Vagina (tissue), 2 donors: ENCODE measurements at regions of chr3 and their contacts with region 1.

Region 1: GRCh38 chr3:157174649-157175498 is 14.9 kb upstream of the CCNL1 start:
- DNase-seq: peak in 1 of 2 donors; percentile 100
- H3K4me3 ChIP-seq: peak overlapping the region; percentile 56 to 59
- H3K27ac ChIP-seq: peak overlapping the region; percentile 95
- H3K4me1 ChIP-seq: peaks cover 14% of the 10 kb centered on the region
- H3K27me3 ChIP-seq: no peaks in the 10 kb centered on the region
- CTCF ChIP-seq: no peak
- POLR2A ChIP-seq: peak in 1 of 2 donors; percentile 94

Region 2: GRCh38 chr3:157159762-157160657 is 14.9 kb before region 1 on chr3 and contains the start of gene CCNL1:
- intact Hi-C with region 1: loop called (anchors 1 kb)
- DNase-seq: peak in 1 of 2 donors; percentile 97
- H3K4me3 ChIP-seq: peak within 1 kb of the TSS; percentile 79 to 92
- H3K27ac ChIP-seq: peak within 1 kb of the TSS; percentile 99
- H3K4me1 ChIP-seq: peaks cover 51% of the 10 kb centered on the region
- H3K27me3 ChIP-seq: no peaks in the 10 kb centered on the region
- CTCF ChIP-seq: peak in 2 of 3 experiments; percentile 6 to 12
- POLR2A ChIP-seq: peak in 1 of 2 donors; percentile 99
- total RNA-seq, gene CCNL1: 269 TPM